MCF 10A (cell line): ENCODE measurements at regions of chr3 and their contacts with region 1.

Region 1: DNA sequence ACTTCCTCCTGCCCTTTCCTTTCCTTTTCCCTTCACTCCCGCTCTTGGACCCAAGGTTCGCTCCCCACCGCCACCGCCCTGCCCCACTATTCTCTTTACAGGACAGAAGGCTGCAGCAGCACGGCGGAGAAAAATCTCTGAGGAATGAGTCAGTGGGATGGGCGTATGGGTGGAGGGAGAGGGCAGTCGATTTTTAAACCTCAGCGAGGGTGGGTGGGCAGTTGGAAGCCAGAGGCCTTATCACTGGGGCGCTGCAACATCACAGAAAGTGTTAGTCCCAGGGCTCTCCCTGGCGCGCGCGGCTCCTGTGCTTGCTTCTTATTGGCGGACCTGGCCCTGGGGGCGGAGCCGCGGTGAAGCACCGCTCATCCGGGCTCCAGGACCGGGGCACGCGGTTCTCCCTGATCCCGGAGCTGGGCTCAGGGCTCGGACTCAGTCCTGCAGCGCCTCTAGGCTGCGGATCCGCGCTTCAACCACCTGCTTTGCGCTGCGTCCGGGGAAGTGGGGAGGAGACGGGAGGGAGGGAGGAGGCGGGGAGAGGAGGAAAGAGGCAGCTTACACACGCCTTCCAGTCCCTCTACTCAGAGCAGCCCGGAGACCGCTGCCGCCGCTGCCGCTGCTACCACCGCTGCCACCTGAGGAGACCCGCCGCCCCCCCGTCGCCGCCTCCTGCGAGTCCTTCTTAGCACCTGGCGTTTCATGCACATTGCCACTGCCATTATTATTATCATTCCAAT is at the start of gene ALCAM:
- DNase-seq: peak; percentile 99
- H3K4me3 Mint-ChIP-seq: peak within 1 kb of the TSS; percentile 100
- H3K27ac Mint-ChIP-seq: peak within 1 kb of the TSS; percentile 98
- H3K4me1 Mint-ChIP-seq: peaks cover 23% of the 10 kb centered on the region
- H3K27me3 Mint-ChIP-seq: no peaks in the 10 kb centered on the region
- CTCF ChIP-seq: peak; percentile 48
- total RNA-seq, gene ALCAM: 98.4 and 112 TPM in 2 replicates

Region 2: DNA sequence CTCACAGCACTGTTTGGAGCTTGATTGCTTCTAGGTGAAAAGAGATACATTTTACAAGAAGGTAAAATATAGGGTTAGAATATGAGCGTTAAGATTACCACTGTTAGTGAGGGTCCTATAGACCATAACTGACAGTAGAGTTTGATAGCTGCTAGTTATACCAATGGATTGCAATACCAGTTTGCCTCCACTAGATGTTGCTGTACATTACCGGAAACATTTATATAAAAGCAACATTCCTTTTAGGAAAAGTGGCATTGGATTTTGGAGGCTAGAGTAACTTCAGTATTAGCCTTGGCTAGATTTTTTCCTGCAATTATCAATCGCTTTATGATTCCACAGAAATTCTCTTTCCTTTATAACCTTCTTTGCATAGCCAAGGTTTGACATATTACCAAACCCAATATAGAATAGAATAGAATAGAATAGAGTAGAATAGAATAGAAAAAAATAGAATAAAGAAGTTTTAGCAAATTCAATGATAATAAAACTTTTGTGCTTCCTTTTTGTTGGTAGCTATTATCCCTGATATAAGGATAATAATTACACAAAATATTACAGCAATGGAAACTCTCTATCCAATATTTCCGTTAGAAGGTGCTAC is 1093.3 kb before region 1 on chr3:
- CTCF ChIA-PET with region 1: interaction called, 8 read pairs
- POLR2A ChIA-PET with region 1: no interaction called
- intact Hi-C with region 1: loop called (anchors 1 kb)
- DNase-seq: peak; percentile 40
- H3K4me3 Mint-ChIP-seq: no peak overlapping the region
- H3K27ac Mint-ChIP-seq: no peak overlapping the region
- H3K4me1 Mint-ChIP-seq: no peaks in the 10 kb centered on the region
- H3K27me3 Mint-ChIP-seq: no peaks in the 10 kb centered on the region
- CTCF ChIP-seq: peak; percentile 50

Region 3: GRCh38 chr3:104628185-104628789 is 738.2 kb before region 1 on chr3:
- CTCF ChIA-PET with region 1: interaction called, 12 read pairs
- POLR2A ChIA-PET with region 1: interaction called, 6 read pairs
- intact Hi-C with region 1: loop called (anchors 1 kb)
- DNase-seq: peak; percentile 79
- H3K4me3 Mint-ChIP-seq: no peak overlapping the region
- H3K27ac Mint-ChIP-seq: peak overlapping the region; percentile 35
- H3K4me1 Mint-ChIP-seq: peaks cover 20% of the 10 kb centered on the region
- H3K27me3 Mint-ChIP-seq: no peaks in the 10 kb centered on the region
- CTCF ChIP-seq: peak; percentile 64

Region 4: GRCh38 chr3:104646196-104646595 is 720.3 kb before region 1 on chr3:
- CTCF ChIA-PET with region 1: no interaction called
- POLR2A ChIA-PET with region 1: no interaction called
- intact Hi-C with region 1: no loop called
- DNase-seq: no peak
- H3K4me3 Mint-ChIP-seq: no peak overlapping the region
- H3K27ac Mint-ChIP-seq: no peak overlapping the region
- H3K4me1 Mint-ChIP-seq: no peaks in the 10 kb centered on the region
- H3K27me3 Mint-ChIP-seq: no peaks in the 10 kb centered on the region
- CTCF ChIP-seq: no peak

Region 5: GRCh38 chr3:104987859-104988258 is 378.6 kb before region 1 on chr3:
- CTCF ChIA-PET with region 1: no interaction called
- POLR2A ChIA-PET with region 1: no interaction called
- intact Hi-C with region 1: loop called (anchors 10 kb)
- DNase-seq: no peak
- H3K4me3 Mint-ChIP-seq: no peak overlapping the region
- H3K27ac Mint-ChIP-seq: no peak overlapping the region
- H3K4me1 Mint-ChIP-seq: no peaks in the 10 kb centered on the region
- H3K27me3 Mint-ChIP-seq: no peaks in the 10 kb centered on the region
- CTCF ChIP-seq: peak; percentile 3

Region 6: DNA sequence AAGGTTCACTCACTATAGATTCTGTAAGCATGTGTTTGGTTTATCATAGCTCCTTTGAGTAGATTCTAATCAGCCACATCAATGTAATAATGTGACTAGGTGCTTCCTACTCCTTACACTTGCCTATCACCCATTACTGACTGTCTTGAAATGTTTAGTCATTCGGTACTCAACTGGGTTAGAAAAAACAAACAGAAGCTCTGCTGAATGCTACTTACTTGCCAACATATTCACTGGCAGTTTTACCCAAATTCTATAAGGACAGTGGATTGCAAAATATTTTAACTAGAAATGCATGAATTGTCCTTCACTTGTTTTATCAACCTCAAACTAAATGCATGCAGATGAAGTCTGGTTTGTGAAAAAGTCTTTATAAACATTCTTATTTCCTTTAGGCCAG is 351.9 kb before region 1 on chr3:
- CTCF ChIA-PET with region 1: no interaction called
- POLR2A ChIA-PET with region 1: no interaction called
- intact Hi-C with region 1: no loop called
- DNase-seq: peak; percentile 29
- H3K4me3 Mint-ChIP-seq: no peak overlapping the region
- H3K27ac Mint-ChIP-seq: no peak overlapping the region
- H3K4me1 Mint-ChIP-seq: no peaks in the 10 kb centered on the region
- H3K27me3 Mint-ChIP-seq: no peaks in the 10 kb centered on the region
- CTCF ChIP-seq: no peak

Region 7: GRCh38 chr3:105274958-105275357 is 91.5 kb before region 1 on chr3:
- CTCF ChIA-PET with region 1: interaction called, 6 read pairs
- POLR2A ChIA-PET with region 1: no interaction called
- intact Hi-C with region 1: loop called (anchors 2 kb)
- DNase-seq: peak; percentile 84
- H3K4me3 Mint-ChIP-seq: no peak overlapping the region
- H3K27ac Mint-ChIP-seq: peak overlapping the region; percentile 85
- H3K4me1 Mint-ChIP-seq: peaks cover 22% of the 10 kb centered on the region
- H3K27me3 Mint-ChIP-seq: no peaks in the 10 kb centered on the region
- CTCF ChIP-seq: no peak

Region 8: GRCh38 chr3:107064445-107065060 is 1698.1 kb after region 1 on chr3:
- CTCF ChIA-PET with region 1: no interaction called
- POLR2A ChIA-PET with region 1: interaction called, 4 read pairs
- intact Hi-C with region 1: loop called (anchors 2 kb)
- DNase-seq: peak; percentile 85
- H3K4me3 Mint-ChIP-seq: no peak overlapping the region
- H3K27ac Mint-ChIP-seq: peak overlapping the region; percentile 29
- H3K4me1 Mint-ChIP-seq: peaks cover 39% of the 10 kb centered on the region
- H3K27me3 Mint-ChIP-seq: no peaks in the 10 kb centered on the region
- CTCF ChIP-seq: peak; percentile 83